Natural killer cell (primary cell): ENCODE measurements at regions of chr17 and their contacts with region 1.

Region 1: DNA sequence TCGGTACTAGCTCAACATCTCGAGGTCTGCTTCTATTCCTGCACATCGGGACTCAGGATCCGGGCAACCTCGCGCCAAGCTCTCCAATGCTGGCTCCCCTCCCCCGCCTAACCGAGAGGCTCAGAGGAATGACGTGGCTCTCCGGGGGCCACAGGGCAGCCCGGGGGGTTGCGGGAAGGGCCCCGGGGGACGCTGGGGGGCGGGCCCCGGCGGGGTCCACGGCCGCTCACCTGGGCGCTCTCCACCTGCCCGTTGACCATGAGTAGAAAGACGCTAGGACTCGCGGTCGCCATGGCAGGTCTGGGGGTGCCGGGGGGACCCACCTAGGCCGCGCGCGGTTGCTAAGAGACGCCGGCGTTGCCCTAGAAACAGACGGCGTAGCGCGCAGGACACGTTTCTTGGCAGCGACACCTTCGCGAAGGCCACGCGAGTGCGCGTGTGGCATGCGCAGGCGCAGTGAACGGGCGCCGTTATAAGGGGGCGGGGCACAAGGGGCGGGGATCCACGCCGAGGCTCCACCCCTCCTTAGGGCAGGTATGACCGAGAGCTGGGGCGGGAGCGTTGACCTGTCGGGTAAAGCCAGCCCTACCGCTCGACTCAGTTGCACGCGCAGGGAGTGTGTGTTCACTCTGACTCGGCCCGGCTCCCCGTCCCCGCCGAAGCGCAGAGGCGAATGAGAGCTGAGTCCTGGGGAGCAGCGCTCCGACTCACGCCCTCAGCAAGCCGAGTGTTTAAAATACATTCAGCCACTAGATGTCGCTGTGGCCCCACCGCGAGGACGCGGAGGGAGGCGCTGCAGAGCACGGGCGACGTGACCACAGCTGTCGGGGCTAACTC is at the start of gene B9D1:
- DNase-seq: peak; percentile 88 to 97
- ATAC-seq: peak; percentile 92 to 96 (median 94)
- H3K4me3 ChIP-seq: peak within 1 kb of the TSS; percentile 74
- H3K4me3 Mint-ChIP-seq: peak within 1 kb of the TSS; percentile 89
- H3K27ac ChIP-seq: peak within 1 kb of the TSS; percentile 34
- H3K27ac Mint-ChIP-seq: peak within 1 kb of the TSS; percentile 79 to 82
- H3K4me1 ChIP-seq: peaks cover 21% of the 10 kb centered on the region
- H3K4me1 Mint-ChIP-seq: peaks cover 23 to 28% of the 10 kb centered on the region in 2 donors
- H3K27me3 ChIP-seq: no peaks in the 10 kb centered on the region
- H3K27me3 Mint-ChIP-seq: peaks cover 9% of the 10 kb centered on the region in 2 donors
- CTCF ChIP-seq: peak; percentile 96
- total RNA-seq, gene B9D1: 3.1 to 7.5 (median 3.7) TPM

Region 2: DNA sequence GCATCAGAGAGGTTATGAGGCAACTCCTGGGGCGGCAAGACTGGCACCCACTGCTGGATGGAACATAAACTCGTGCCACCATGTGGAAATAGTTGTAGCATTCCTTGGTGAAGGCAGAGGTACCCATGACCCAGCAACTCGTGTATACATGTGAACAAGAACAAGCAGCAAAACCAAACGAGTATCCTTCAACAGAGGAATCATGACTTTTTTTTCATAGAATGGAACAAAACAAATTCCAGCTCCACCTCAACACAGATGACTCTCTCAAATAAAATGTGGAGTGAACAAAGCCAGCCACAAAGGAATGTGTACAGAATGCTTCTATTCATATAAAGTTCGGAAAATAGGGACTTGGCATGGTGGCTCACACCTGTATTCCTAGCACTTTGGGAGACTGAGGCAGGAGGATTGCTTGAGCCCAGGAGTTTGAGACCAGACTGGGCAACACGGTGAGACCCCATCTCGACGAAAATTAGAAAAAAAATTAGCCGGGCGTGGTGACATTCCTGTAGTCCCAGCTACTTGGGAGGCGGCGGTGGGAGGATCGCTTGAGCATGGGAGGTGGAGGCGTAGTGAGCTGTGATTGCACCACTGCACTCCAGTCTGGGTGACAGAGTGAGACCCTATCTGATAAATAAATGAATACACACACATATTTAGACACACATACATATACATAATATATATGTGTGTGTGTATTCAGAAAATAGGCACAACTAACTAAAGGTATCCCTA is 35.3 kb before region 1 on chr17:
- intact Hi-C with region 1: no loop called
- DNase-seq: no peak
- ATAC-seq: no peak
- H3K4me3 ChIP-seq: no peak overlapping the region
- H3K4me3 Mint-ChIP-seq: no peak overlapping the region
- H3K27ac ChIP-seq: no peak overlapping the region
- H3K27ac Mint-ChIP-seq: no peak overlapping the region
- H3K4me1 ChIP-seq: no peaks in the 10 kb centered on the region
- H3K4me1 Mint-ChIP-seq: no peaks in the 10 kb centered on the region
- H3K27me3 ChIP-seq: no peaks in the 10 kb centered on the region
- H3K27me3 Mint-ChIP-seq: peaks cover 7 to 28% of the 10 kb centered on the region in 2 donors
- CTCF ChIP-seq: no peak

Region 3: GRCh38 chr17:19377602-19378392 is 15.3 kb after region 1 on chr17:
- intact Hi-C with region 1: loop called (anchors 1 kb)
- DNase-seq: peak; percentile 94 to 97
- ATAC-seq: peak; percentile 88 to 98 (median 95)
- H3K4me3 ChIP-seq: peak overlapping the region; percentile 99
- H3K4me3 Mint-ChIP-seq: peak overlapping the region; percentile 99
- H3K27ac ChIP-seq: peak overlapping the region; percentile 91
- H3K27ac Mint-ChIP-seq: peak overlapping the region; percentile 97 to 98
- H3K4me1 ChIP-seq: peaks cover 38% of the 10 kb centered on the region
- H3K4me1 Mint-ChIP-seq: peaks cover 36 to 57% of the 10 kb centered on the region in 2 donors
- H3K27me3 ChIP-seq: no peaks in the 10 kb centered on the region
- H3K27me3 Mint-ChIP-seq: no peaks in the 10 kb centered on the region
- CTCF ChIP-seq: no peak

Region 4: GRCh38 chr17:19447085-19447583 is 84.6 kb after region 1 on chr17:
- intact Hi-C with region 1: loop called (anchors 1 kb)
- DNase-seq: peak; percentile 57 to 85
- ATAC-seq: peak; percentile 66 to 93 (median 77)
- H3K4me3 ChIP-seq: no peak overlapping the region
- H3K4me3 Mint-ChIP-seq: peak overlapping the region; percentile 32
- H3K27ac ChIP-seq: no peak overlapping the region
- H3K27ac Mint-ChIP-seq: no peak overlapping the region
- H3K4me1 ChIP-seq: no peaks in the 10 kb centered on the region
- H3K4me1 Mint-ChIP-seq: peaks cover 6 to 8% of the 10 kb centered on the region in 2 donors
- H3K27me3 ChIP-seq: no peaks in the 10 kb centered on the region
- H3K27me3 Mint-ChIP-seq: peaks cover 7 to 24% of the 10 kb centered on the region in 2 donors
- CTCF ChIP-seq: peak; percentile 87

Region 5: GRCh38 chr17:19648475-19649406 is 286.2 kb after region 1 on chr17 and contains the start of gene ALDH3A2:
- intact Hi-C with region 1: loop called (anchors 10 kb)
- DNase-seq: peak; percentile 90 to 94
- ATAC-seq: peak; percentile 92 to 98 (median 95)
- H3K4me3 ChIP-seq: peak within 1 kb of the TSS; percentile 82
- H3K4me3 Mint-ChIP-seq: peak within 1 kb of the TSS; percentile 98
- H3K27ac ChIP-seq: peak within 1 kb of the TSS; percentile 76
- H3K27ac Mint-ChIP-seq: peak within 1 kb of the TSS; percentile 80 to 89
- H3K4me1 ChIP-seq: peaks cover 22% of the 10 kb centered on the region
- H3K4me1 Mint-ChIP-seq: peaks cover 36 to 55% of the 10 kb centered on the region in 2 donors
- H3K27me3 ChIP-seq: no peaks in the 10 kb centered on the region
- H3K27me3 Mint-ChIP-seq: no peaks in the 10 kb centered on the region
- CTCF ChIP-seq: no peak
- total RNA-seq, gene ALDH3A2: 25.3 to 33.7 (median 31.4) TPM

Region 6: DNA sequence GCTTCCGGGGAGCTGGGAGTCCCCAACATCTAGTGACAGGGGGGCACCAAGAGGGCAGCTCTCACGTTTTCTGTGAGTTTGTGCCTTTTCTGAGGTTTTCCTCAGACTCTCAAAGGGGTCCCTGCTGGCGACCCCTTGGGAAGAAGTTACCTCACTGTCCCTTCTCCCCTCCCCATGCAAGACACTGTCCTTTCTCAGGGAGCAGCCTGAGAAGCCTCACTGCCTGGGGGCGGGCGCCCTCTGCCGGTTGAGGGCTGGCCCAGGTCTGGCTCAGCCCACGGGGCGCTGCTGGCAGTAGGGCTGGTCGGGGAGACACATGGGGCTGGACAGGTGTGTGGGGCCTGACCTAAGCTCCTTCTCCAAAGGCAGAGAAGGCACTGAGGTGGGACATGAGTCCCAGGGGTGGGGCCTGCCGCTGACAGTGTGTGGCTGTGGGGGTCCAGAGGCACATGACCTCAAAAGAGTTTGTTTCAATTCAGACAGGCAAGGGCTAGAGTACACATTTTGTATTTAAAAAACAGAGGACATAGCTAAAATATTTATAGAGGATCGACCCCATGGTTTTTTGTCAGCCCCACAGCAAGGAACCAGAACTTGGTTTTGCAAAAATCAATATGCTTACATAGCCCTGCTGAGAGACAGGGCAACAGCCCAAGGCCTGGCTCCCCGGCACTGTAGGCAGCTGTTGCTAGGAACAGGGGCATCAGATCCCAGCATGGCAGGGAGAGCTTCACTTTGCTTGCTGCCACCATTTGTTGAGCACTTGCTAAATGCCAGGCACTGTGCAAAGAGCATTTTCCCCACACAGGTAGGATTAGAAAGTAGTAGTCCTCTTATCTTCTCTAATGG is 404.2 kb after region 1 on chr17:
- intact Hi-C with region 1: loop called (anchors 2 kb)
- DNase-seq: peak; percentile 75 to 86
- ATAC-seq: peak; percentile 74 to 93 (median 92)
- H3K4me3 ChIP-seq: no peak overlapping the region
- H3K4me3 Mint-ChIP-seq: no peak overlapping the region
- H3K27ac ChIP-seq: no peak overlapping the region
- H3K27ac Mint-ChIP-seq: no peak overlapping the region
- H3K4me1 ChIP-seq: peaks cover 14% of the 10 kb centered on the region
- H3K4me1 Mint-ChIP-seq: no peaks in the 10 kb centered on the region
- H3K27me3 ChIP-seq: no peaks in the 10 kb centered on the region
- H3K27me3 Mint-ChIP-seq: peaks cover 0 to 2% of the 10 kb centered on the region in 2 donors
- CTCF ChIP-seq: peak; percentile 90